T-cell (primary cell): ENCODE measurements at regions of chr1 and their contacts with region 1.

Region 1: GRCh38 chr1:53909946-53910345 is 16.0 kb downstream of the DIO1 start:
- DNase-seq: no peak
- ATAC-seq: no peak
- H3K4me3 ChIP-seq: no peak overlapping the region
- H3K4me3 Mint-ChIP-seq: no peak overlapping the region
- H3K27ac ChIP-seq: no peak overlapping the region
- H3K27ac Mint-ChIP-seq: no peak overlapping the region
- H3K4me1 ChIP-seq: no peaks in the 10 kb centered on the region
- H3K4me1 Mint-ChIP-seq: peaks cover 0 to under 1% (median 0%) of the 10 kb centered on the region in 3 donors
- H3K27me3 ChIP-seq: no peaks in the 10 kb centered on the region
- H3K27me3 Mint-ChIP-seq: no peaks in the 10 kb centered on the region

Region 2: DNA sequence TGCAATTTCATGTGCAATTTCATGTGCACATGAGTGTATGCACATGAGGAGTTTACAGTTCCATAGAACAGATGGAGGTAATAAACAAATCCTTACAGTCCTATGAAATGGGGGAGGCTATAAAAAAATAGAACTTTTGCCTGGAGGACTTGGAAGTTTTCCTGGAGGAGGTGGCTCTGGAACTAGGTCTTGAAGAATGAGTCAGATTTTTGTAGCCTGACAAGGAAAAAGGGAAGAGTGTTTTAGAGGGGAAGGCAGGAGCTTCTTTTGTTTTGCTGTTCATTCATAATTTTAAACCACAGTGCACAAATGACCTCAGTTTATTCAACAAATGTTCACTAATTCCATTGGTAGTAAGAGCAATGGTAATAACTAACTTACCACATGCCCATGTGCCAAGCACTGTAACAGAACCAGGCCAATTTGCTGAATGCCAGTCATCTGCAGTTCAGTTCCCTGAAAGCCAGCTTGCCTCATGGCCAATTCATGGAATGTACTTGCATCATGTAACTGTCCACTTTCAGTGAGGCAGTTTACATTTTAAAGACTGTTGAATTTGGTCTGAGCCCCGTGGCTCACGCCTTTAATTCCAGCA is 13.2 kb before region 1 on chr1:
- CTCF ChIA-PET with region 1: interaction called, 3 to 4 read pairs
- POLR2A ChIA-PET with region 1: interaction called in 1 of 2 experiments, 11 read pairs
- DNase-seq: no peak
- ATAC-seq: no peak
- H3K4me3 ChIP-seq: no peak overlapping the region
- H3K4me3 Mint-ChIP-seq: no peak overlapping the region
- H3K27ac ChIP-seq: no peak overlapping the region
- H3K27ac Mint-ChIP-seq: no peak overlapping the region
- H3K4me1 ChIP-seq: no peaks in the 10 kb centered on the region
- H3K4me1 Mint-ChIP-seq: no peaks in the 10 kb centered on the region
- H3K27me3 ChIP-seq: peaks cover 0 to 8% of the 10 kb centered on the region in 2 experiments
- H3K27me3 Mint-ChIP-seq: peaks cover 6 to 9% of the 10 kb centered on the region in 2 donors